ENCODE measurements at regions of chr12 and their contacts with region 1.

Region 1: DNA sequence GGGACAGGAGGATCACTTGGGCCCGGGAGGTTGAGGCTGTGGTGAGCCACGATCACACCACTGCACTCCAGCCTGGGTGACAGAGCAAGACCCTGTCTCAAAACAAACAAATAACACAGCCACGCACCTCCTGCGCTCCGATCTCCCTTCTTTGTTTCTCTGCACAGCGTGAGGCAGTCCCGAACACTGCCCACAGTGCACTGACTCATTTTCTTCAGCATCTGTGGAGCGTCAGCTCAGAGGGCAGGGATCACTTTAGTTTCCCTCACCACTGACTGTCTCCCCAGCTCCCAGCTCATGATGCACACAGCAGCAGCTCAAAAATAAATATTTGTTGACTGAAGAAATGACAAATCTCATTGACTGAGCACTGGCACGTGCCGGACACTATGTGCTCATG is 883 bp upstream of the MYL2 start:
- DNase-seq: no peak
- H3K4me3 ChIP-seq: no peak overlapping the region
- H3K27ac ChIP-seq: no peak overlapping the region
- H3K4me1 ChIP-seq: peaks cover 0 to 15% (median 5%) of the 10 kb centered on the region in 4 experiments; a peak in 4 of 7 replicates
- H3K27me3 ChIP-seq: no peaks in the 10 kb centered on the region
- CTCF ChIP-seq: no peak
- EP300 ChIP-seq: no peak
- POLR2A ChIP-seq: no peak
- RAD21 ChIP-seq: no peak

Region 2: GRCh38 chr12:110908377-110909152 is 12.7 kb before region 1 on chr12:
- CTCF ChIA-PET with region 1: interaction called, 5 read pairs
- POLR2A ChIA-PET with region 1: interaction called, 11 read pairs
- DNase-seq: no peak
- H3K4me3 ChIP-seq: no peak overlapping the region
- H3K27ac ChIP-seq: no peak overlapping the region
- H3K4me1 ChIP-seq: peaks cover 0 to 6% (median 0%) of the 10 kb centered on the region in 4 experiments; a peak in 2 of 7 replicates
- H3K27me3 ChIP-seq: peaks cover 0 to 2% (median 0%) of the 10 kb centered on the region in 4 experiments; a peak in 1 of 7 replicates
- CTCF ChIP-seq: no peak
- EP300 ChIP-seq: no peak
- POLR2A ChIP-seq: no peak
- RAD21 ChIP-seq: no peak

Region 3: GRCh38 chr12:110932046-110932445 is 10.8 kb after region 1 on chr12:
- CTCF ChIA-PET with region 1: interaction called, 13 read pairs
- POLR2A ChIA-PET with region 1: interaction called, 9 read pairs
- DNase-seq: peak in 1 of 2 experiments; percentile 63
- H3K4me3 ChIP-seq: no peak overlapping the region
- H3K27ac ChIP-seq: no peak overlapping the region
- H3K4me1 ChIP-seq: peaks cover 3 to 19% (median 11%) of the 10 kb centered on the region in 4 experiments
- H3K27me3 ChIP-seq: no peaks in the 10 kb centered on the region; a peak in 1 of 7 replicates
- CTCF ChIP-seq: peak; percentile 40 to 68 (median 60)
- EP300 ChIP-seq: no peak
- POLR2A ChIP-seq: no peak
- RAD21 ChIP-seq: peak; percentile 53 to 69

Region 4: GRCh38 chr12:110983806-110984205 is 62.5 kb after region 1 on chr12:
- CTCF ChIA-PET with region 1: no interaction called
- POLR2A ChIA-PET with region 1: no interaction called
- DNase-seq: no peak
- H3K4me3 ChIP-seq: no peak overlapping the region
- H3K27ac ChIP-seq: no peak overlapping the region
- H3K4me1 ChIP-seq: no peaks in the 10 kb centered on the region
- H3K27me3 ChIP-seq: no peaks in the 10 kb centered on the region; a peak in 1 of 7 replicates
- CTCF ChIP-seq: no peak
- EP300 ChIP-seq: no peak
- POLR2A ChIP-seq: no peak
- RAD21 ChIP-seq: no peak

Measured in H1 (cell line).